HEK293 (cell line): ENCODE measurements at regions of chr1 and their contacts with region 1.

Region 1: GRCh38 chr1:89454845-89455521 is 69.6 kb upstream of the LRRC8B start:
- H3K4me3 ChIP-seq: no peak overlapping the region
- H3K27ac ChIP-seq: no peak overlapping the region
- H3K4me1 ChIP-seq: no peaks in the 10 kb centered on the region
- CTCF ChIP-seq: no peak; the same call in 1 of the 2 replicates

Region 2: GRCh38 chr1:88973520-88974137 is 481.4 kb before region 1 on chr1:
- CTCF ChIA-PET with region 1: interaction called, 11 read pairs
- POLR2A ChIA-PET with region 1: no interaction called
- H3K4me3 ChIP-seq: no peak overlapping the region
- H3K27ac ChIP-seq: no peak overlapping the region
- H3K4me1 ChIP-seq: no peaks in the 10 kb centered on the region
- CTCF ChIP-seq: no peak

Region 3: GRCh38 chr1:88998716-88999115 is 456.3 kb before region 1 on chr1:
- CTCF ChIA-PET with region 1: interaction called, 27 read pairs
- POLR2A ChIA-PET with region 1: no interaction called
- H3K4me3 ChIP-seq: no peak overlapping the region
- H3K27ac ChIP-seq: no peak overlapping the region
- H3K4me1 ChIP-seq: no peaks in the 10 kb centered on the region
- CTCF ChIP-seq: 0 out of 2 replicates have a peak, but pooled peaks have one; percentile 13

Region 4: GRCh38 chr1:89310505-89310904 is 144.5 kb before region 1 on chr1:
- CTCF ChIA-PET with region 1: no interaction called
- POLR2A ChIA-PET with region 1: no interaction called
- H3K4me3 ChIP-seq: no peak overlapping the region
- H3K27ac ChIP-seq: no peak overlapping the region
- H3K4me1 ChIP-seq: no peaks in the 10 kb centered on the region
- CTCF ChIP-seq: no peak

Region 5: GRCh38 chr1:89503690-89504089 is 48.7 kb after region 1 on chr1:
- CTCF ChIA-PET with region 1: no interaction called
- POLR2A ChIA-PET with region 1: no interaction called
- H3K4me3 ChIP-seq: no peak overlapping the region
- H3K27ac ChIP-seq: no peak overlapping the region
- H3K4me1 ChIP-seq: no peaks in the 10 kb centered on the region
- CTCF ChIP-seq: no peak